ENCODE measurements at regions of chr16 and their contacts with region 1.

Region 1: DNA sequence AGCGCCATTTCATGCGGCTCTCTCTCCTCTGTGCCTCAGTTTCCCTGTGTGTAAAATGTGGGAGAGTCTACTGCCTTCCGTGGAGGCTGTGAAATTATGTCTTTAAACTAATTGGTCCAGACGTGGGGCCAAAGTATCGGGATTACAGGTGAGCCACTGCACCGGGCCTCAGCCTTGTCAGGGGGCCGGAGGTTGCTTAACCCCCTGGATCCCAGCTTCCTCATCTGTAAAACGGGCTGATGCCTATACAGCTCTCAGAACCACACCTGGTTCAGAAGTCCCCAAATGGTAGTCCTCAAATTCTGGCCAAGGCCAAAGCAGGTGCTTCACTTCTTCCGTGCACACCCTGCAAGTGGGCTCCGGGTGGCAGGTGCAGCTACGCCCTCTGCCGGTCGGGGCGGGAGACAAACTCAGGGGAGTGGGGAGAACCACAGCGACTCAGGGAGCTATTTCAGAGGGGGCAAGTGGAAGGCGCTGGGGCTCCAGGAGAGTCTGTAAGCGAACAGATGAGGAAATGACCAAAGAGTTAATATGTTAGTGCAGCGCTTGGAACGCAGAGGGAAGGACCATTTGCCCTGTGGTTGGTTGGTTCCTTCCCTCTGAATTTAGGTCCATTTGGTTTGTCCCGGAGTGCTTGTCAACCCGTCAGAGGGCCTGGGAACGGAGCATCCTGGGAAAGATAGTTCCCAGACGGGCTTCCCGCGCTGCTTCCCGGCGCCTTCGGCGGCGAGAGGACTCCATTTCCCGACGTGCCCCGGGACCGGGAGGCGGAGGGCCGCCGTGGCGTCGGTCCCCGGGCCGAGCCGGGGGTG is at the start of gene MGRN1:
- DNase-seq: peak; percentile 96 to 97
- ATAC-seq: peak; percentile 97 to 98
- H3K4me3 ChIP-seq: peak within 1 kb of the TSS; percentile 94
- H3K27ac ChIP-seq: peak within 1 kb of the TSS; percentile 94 to 97
- H3K4me1 ChIP-seq: peaks cover 11% of the 10 kb centered on the region
- CTCF ChIP-seq: peak; percentile 96
- EP300 ChIP-seq: no peak
- POLR2A ChIP-seq: no peak
- RAD21 ChIP-seq: peak; percentile 51 to 59; a peak in 4 of 5 replicates
- polyA plus RNA-seq, gene MGRN1: 4.3 and 8.2 TPM in 2 replicates

Region 2: GRCh38 chr16:4637501-4638166 is 13.4 kb after region 1 on chr16:
- CTCF ChIA-PET with region 1: interaction called, 35 read pairs
- POLR2A ChIA-PET with region 1: no interaction called
- DNase-seq: no peak
- ATAC-seq: no peak
- H3K4me3 ChIP-seq: no peak overlapping the region
- H3K27ac ChIP-seq: no peak overlapping the region
- H3K4me1 ChIP-seq: no peaks in the 10 kb centered on the region
- CTCF ChIP-seq: no peak
- EP300 ChIP-seq: no peak
- POLR2A ChIP-seq: no peak
- RAD21 ChIP-seq: no peak

Region 3: DNA sequence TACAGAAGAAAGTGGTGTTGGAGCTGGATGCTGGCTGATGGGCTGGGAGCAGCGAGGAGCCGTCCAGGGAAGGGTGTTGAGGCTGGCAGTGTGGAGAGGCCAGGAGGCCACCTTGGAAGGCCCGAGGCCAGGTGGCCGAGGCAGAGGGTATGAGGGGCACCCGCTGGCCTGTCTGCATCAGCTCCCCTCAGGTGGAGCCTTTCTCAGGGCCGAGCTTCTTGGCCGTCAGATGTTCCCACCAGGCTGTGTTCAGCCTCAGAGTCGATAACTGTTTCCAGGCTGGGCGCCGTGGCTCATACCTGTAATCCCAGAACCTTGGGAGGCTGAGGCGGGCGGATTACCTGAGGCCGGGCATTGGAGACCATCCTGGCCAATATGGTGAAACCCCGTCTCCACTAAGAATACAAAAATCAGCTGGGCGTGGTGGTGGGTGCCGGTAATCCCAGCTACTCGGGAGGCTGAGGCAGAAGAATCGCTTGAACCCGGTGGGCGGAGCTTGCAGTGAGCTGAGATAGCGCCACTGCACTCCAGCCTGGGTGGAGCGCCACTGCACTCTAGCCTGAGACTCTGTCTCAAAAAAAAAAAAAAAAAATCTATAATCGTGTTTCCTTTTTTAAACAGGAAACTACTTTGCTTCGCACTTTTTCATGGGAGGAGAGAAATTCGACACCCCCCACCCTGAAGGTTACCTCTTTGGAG is 25.7 kb after region 1 on chr16:
- CTCF ChIA-PET with region 1: interaction called, 16 read pairs
- POLR2A ChIA-PET with region 1: no interaction called
- DNase-seq: no peak
- ATAC-seq: no peak
- H3K4me3 ChIP-seq: no peak overlapping the region
- H3K27ac ChIP-seq: no peak overlapping the region; a peak in 1 of 6 replicates
- H3K4me1 ChIP-seq: peaks cover 26% of the 10 kb centered on the region
- CTCF ChIP-seq: no peak
- EP300 ChIP-seq: no peak
- POLR2A ChIP-seq: no peak
- RAD21 ChIP-seq: no peak

Region 4: DNA sequence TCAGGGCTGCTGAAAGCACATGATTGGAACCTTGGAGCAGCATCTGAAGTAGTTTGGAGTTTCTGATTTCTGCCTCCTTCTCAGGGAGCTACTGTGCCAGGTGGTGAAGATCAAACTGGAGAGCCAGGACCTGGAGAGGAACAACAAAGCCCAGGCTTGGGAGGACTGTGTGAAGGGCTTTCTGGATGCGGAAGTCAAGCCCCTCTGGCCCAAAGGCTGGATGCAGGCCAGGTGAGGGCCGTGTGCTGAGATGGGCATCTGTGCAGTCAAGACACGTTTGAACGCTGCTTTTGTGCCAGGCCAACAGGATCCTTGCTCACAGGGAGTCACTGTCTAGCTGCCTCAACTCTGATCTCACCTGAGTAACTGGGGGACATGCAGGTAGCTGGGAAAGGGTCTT is 246.8 kb after region 1 on chr16:
- CTCF ChIA-PET with region 1: no interaction called
- POLR2A ChIA-PET with region 1: interaction called, 14 read pairs
- DNase-seq: no peak
- ATAC-seq: no peak
- H3K4me3 ChIP-seq: no peak overlapping the region
- H3K27ac ChIP-seq: no peak overlapping the region
- H3K4me1 ChIP-seq: peaks cover 9% of the 10 kb centered on the region
- CTCF ChIP-seq: no peak
- EP300 ChIP-seq: no peak
- POLR2A ChIP-seq: no peak
- RAD21 ChIP-seq: no peak

Measured in A549 (cell line).